Heart left ventricle (tissue), 16 donors: ENCODE measurements at regions of chr15 and their contacts with region 1.

Region 1: DNA sequence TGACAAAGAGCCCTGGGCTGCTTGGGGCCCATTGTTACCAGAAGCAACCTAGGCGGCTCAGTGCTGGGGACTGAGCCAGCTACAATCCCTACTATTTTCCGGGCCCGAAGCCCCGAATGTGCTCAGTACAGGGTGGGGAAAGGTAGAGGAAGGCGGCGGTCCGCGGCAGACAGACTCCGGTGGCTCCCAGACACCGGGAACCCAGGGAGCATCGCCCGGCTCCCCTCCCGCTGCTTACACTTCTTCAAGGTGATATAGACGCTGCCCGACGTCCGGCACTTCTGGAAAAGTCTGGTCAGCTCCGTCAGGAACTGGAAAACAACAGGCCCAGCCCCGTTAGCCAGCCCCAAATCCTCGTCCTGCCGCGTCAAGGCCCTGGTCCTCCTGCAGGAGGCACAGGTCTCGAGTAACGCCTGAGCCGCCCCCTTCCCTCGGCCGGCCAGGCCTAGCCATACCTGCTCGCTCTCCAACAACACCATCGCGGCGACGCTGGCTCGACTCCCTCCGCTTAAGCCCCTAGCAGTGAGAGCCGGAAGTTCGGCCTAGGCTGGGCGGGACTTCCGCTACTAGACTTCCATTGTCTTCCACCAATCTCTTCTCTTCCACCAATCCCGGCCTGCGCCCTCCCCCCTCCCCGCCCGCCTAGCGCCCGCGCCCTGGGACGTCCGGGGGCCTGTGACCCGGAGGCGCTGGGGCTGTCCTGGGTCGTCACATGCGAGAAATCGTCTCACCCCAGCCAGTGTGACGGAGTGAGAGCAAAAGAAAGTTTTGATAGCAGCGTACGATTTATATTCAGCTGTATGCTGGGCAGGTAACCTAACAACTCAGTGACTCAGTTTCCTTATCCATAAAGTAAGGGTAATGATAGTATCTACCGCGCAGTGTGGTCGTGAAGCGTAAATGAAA is at the start of gene SRP14:
- DNase-seq: peak; percentile 95 to 97 (median 97)
- ATAC-seq: peak; percentile 97 to 99 (median 98)
- H3K4me3 ChIP-seq: peak within 1 kb of the TSS; percentile 72 to 98 (median 84)
- H3K27ac ChIP-seq: peak within 1 kb of the TSS; percentile 88 to 98 (median 94)
- H3K4me1 ChIP-seq: peaks cover 4 to 43% (median 26%) of the 10 kb centered on the region in 12 donors
- H3K27me3 ChIP-seq: no peaks in the 10 kb centered on the region
- CTCF ChIP-seq: peak in 4 of 12 donors; percentile 13 to 27 (median 16)
- POLR2A ChIP-seq: peak in 1 of 2 donors; percentile 80
- total RNA-seq, gene SRP14: 189 to 446 (median 218) TPM

Region 2: GRCh38 chr15:40160689-40161688 is 122.1 kb after region 1 on chr15 and contains the start of gene BUB1B:
- intact Hi-C with region 1: loop called in 3 of 10 experiments (anchors 2 to 10 kb)
- DNase-seq: peak; percentile 90 to 94 (median 92)
- ATAC-seq: peak; percentile 98 to 99 (median 99)
- H3K4me3 ChIP-seq: peak within 1 kb of the TSS; percentile 24 to 70 (median 62)
- H3K27ac ChIP-seq: no peak within 1 kb of the TSS
- H3K4me1 ChIP-seq: peaks cover 0 to 12% (median 6%) of the 10 kb centered on the region in 12 donors
- H3K27me3 ChIP-seq: no peaks in the 10 kb centered on the region
- CTCF ChIP-seq: no peak
- POLR2A ChIP-seq: no peak
- total RNA-seq, gene BUB1B: 0.46 to 6.4 (median 1.2) TPM in 8 of 9 donors, not detected in the other